Activated CD4-positive, alpha-beta T cell treated with anti-CD3 and anti-CD28 coated beads for 36 hours (primary cell): ENCODE measurements at regions of chr18 and their contacts with region 1.

Region 1: GRCh38 chr18:74495581-74496507 is at the start of gene CNDP2:
- DNase-seq: peak; percentile 100
- ATAC-seq: peak; percentile 71
- H3K4me3 Mint-ChIP-seq: peak within 1 kb of the TSS; percentile 81
- H3K27ac Mint-ChIP-seq: peak within 1 kb of the TSS; percentile 100
- H3K4me1 Mint-ChIP-seq: peaks cover 37% of the 10 kb centered on the region
- H3K27me3 Mint-ChIP-seq: no peaks in the 10 kb centered on the region
- total RNA-seq, gene CNDP2: 128 to 146 TPM

Region 2: DNA sequence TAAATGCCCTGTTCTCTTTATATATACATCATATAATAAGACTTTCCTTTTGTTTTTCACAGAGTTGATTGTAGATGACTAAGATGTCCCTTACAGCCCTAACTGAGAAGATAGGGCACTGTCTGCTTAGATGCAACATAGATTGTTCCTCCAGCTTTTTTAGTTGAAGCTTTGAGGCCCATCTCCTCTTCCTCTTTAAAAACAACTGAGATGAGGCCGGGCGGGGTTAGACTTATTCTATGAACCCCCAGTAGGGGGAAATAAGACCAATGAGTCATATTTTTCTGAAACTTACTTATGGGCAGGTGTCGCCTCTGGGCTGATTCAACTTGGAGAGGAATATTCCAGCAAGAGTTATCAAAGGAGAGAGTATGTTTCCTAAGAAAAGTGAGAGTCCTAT is 432.8 kb before region 1 on chr18:
- CTCF ChIA-PET with region 1: no interaction called
- POLR2A ChIA-PET with region 1: no interaction called
- intact Hi-C with region 1: loop called in 1 of 2 experiments (anchors 5 kb)
- DNase-seq: peak; percentile 65
- ATAC-seq: peak; percentile 55
- H3K4me3 Mint-ChIP-seq: no peak overlapping the region
- H3K27ac Mint-ChIP-seq: peak overlapping the region; percentile 75
- H3K4me1 Mint-ChIP-seq: peaks cover 34% of the 10 kb centered on the region
- H3K27me3 Mint-ChIP-seq: no peaks in the 10 kb centered on the region

Region 3: DNA sequence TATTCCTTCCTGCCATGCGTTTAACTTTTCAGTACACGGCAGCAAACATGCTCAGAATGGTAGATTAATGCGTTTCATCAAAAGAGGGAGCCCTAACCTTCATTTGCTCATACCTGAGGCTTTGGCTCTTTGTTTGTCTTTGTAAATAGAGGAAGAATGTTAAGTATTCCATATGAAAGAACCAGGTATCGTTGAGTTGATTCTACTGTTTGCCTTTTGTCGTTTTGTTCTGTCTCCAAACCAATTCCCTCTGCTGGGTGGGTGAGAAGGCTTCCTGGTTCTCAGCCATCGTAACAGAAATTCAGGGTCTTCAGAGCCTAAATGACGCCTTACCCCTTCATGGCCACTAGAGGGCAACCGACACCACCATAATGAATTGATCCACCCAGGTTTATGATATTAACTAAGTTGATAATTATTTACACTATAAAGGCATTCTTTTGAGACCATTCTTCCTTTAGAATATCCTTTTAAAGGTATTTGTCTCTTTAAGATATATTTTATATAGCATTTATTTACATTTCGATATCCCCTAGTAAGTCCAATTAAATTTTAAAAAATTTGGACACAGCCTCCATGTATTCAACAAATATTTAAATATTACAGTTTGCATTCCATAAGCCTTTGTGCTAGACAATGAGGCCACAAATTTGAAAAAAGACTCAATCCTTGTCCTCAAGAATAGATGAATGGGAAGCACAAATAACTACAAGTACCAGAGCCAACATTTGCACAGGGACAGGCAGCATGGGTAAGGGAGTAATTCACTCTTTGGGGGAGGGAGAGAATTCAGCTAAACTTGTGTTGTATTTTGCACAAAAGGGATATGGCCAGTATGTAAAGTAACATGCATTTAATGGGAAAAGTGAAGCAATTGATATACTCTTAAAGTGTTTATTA is 299.4 kb before region 1 on chr18:
- CTCF ChIA-PET with region 1: interaction called, 5 read pairs
- POLR2A ChIA-PET with region 1: no interaction called
- intact Hi-C with region 1: loop called (anchors 1 to 5 kb)
- DNase-seq: peak; percentile 57
- ATAC-seq: peak; percentile 90
- H3K4me3 Mint-ChIP-seq: peak overlapping the region; percentile 32
- H3K27ac Mint-ChIP-seq: no peak overlapping the region
- H3K4me1 Mint-ChIP-seq: peaks cover 4% of the 10 kb centered on the region
- H3K27me3 Mint-ChIP-seq: peaks cover 3% of the 10 kb centered on the region

Region 4: DNA sequence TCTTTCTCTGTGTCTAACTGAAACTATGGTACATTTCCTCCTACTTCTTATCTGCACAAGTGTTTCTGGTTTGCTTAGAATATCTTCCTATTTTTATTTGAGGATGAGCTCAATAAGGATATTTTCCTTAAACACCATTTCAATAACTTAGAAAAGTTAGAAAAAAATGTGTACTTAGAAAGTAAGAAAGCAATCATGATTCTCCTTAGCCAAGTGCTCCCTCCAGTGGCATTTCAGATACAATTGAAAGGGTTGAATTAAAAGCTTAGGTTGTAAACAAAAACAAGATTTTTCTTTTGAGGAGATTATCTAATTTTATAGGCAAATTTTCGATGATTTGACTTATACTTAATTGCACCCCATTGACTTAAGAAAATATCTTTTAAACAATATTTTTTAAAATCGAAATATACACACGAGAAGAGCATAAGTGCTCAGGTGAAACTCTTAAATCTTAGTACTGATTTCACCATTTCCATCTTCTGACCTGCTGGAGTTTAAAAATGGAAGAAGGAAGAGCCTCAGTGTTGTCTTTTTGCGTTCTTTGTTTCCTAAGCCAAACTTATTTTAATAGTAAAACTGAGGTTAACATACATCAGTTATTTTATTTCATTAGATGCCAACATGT is 153.3 kb before region 1 on chr18:
- CTCF ChIA-PET with region 1: interaction called, 11 read pairs
- POLR2A ChIA-PET with region 1: no interaction called
- intact Hi-C with region 1: no loop called
- DNase-seq: peak; percentile 39
- ATAC-seq: no peak
- H3K4me3 Mint-ChIP-seq: no peak overlapping the region
- H3K27ac Mint-ChIP-seq: no peak overlapping the region
- H3K4me1 Mint-ChIP-seq: no peaks in the 10 kb centered on the region
- H3K27me3 Mint-ChIP-seq: peaks cover 7% of the 10 kb centered on the region

Region 5: DNA sequence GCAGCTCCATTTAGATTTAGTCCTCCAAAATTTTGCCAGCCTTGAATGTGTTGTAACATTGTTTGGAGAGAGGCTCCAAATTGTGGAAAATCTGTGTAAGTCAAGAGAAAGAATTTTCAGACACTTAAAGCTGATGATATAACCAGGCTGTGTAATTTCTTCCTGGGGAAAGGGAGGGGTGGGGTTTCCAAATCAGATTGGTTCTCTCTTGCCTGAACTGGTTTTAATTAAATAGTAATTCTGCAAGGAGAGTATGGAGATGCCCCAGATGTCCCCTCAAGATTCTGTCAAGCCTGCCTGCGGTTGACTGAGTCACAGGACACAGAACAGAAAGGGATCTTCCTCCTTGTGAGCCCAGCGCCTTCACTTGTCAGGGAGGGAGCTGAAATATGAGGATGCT is 125.7 kb before region 1 on chr18:
- CTCF ChIA-PET with region 1: interaction called, 8 read pairs
- POLR2A ChIA-PET with region 1: no interaction called
- intact Hi-C with region 1: loop called in 1 of 2 experiments (anchors 5 kb)
- DNase-seq: no peak
- ATAC-seq: no peak
- H3K4me3 Mint-ChIP-seq: no peak overlapping the region
- H3K27ac Mint-ChIP-seq: no peak overlapping the region
- H3K4me1 Mint-ChIP-seq: peaks cover 45% of the 10 kb centered on the region
- H3K27me3 Mint-ChIP-seq: peaks cover 7% of the 10 kb centered on the region

Region 6: GRCh38 chr18:74796841-74797576 is 301.2 kb after region 1 on chr18:
- CTCF ChIA-PET with region 1: no interaction called
- POLR2A ChIA-PET with region 1: no interaction called
- intact Hi-C with region 1: no loop called
- DNase-seq: peak; percentile 38
- ATAC-seq: peak; percentile 99
- H3K4me3 Mint-ChIP-seq: no peak overlapping the region
- H3K27ac Mint-ChIP-seq: no peak overlapping the region
- H3K4me1 Mint-ChIP-seq: peaks cover 20% of the 10 kb centered on the region
- H3K27me3 Mint-ChIP-seq: no peaks in the 10 kb centered on the region

Region 7: DNA sequence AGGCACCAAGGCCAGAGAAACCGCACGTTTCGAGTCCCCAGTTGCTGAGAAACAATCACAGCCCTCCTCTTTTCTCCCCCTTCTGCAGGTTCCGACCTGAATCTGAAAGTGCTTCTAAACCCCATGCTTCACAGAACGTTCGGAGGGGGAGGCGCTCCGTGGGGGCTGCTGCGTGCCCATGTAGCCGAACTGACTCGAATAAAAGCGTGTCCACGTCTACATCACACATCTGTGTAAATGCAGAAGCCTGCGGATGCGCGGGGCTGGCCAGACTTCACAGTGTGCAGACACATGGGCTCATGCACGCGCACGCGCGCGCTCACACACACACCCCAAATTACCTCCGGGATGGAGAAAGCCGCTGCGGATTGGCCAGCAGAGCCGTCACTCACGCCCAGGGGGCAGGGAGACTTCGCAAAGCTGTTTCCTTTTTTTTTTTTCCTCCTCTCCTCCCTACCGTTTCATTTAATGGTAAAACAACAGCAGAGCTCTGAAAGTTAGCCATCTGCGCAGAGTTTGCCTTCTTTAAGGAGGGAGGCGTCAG is 1996.9 kb after region 1 on chr18:
- CTCF ChIA-PET with region 1: no interaction called
- POLR2A ChIA-PET with region 1: no interaction called
- intact Hi-C with region 1: loop called in 1 of 2 experiments (anchors 5 kb)
- DNase-seq: peak; percentile 100
- ATAC-seq: peak; percentile 85
- H3K4me3 Mint-ChIP-seq: peak overlapping the region; percentile 87
- H3K27ac Mint-ChIP-seq: peak overlapping the region; percentile 89
- H3K4me1 Mint-ChIP-seq: peaks cover 36% of the 10 kb centered on the region
- H3K27me3 Mint-ChIP-seq: peaks cover 33% of the 10 kb centered on the region